ENCODE measurements at regions of chr6 and their contacts with region 1.

Region 1: DNA sequence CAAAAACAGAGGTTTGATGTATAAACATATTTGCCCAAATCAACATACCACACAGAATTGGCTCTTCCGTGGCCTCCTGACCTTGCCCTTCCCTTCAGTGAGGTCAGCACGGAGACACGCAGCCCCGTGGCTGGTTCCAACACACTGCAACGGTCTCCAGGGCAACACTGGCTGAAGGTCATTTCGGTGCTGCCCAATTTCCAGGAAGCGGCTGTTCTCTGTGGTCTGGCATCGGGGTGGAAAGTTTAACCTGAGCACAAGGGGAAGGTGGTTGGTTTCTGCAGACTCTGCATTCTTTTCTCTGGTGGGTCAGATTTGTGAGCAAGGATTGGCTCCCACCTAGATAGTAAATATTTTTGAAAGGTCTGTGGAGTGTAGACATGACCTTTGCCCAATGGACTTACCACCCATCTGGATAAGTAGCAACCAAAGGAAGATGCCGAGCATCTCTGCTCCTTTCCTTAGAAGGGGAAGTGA is 177.6 kb upstream of the PHACTR1 start:
- DNase-seq: peak; percentile 89
- H3K4me3 ChIP-seq: no peak overlapping the region
- H3K27ac ChIP-seq: peak overlapping the region; percentile 87
- H3K4me1 ChIP-seq: peaks cover 51% of the 10 kb centered on the region
- H3K27me3 ChIP-seq: no peaks in the 10 kb centered on the region
- CTCF ChIP-seq: no peak
- POLR2A ChIP-seq: peak; percentile 38

Region 2: DNA sequence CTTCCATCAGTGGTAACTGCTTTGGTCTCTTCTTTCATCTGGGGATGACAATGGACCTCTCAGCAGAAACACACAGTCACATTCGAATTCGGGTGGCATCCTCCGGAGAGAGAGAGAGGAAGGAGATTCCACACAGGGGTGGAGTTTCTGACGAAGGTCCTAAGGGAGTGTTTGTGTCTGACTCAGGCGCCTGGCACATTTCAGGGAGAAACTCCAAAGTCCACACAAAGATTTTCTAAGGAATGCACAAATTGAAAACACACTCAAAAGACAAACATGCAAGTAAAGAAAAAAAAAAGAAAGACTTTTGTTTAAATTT is 242.7 kb before region 1 on chr6:
- CTCF ChIA-PET with region 1: interaction called, 3 read pairs
- POLR2A ChIA-PET with region 1: interaction called, 6 read pairs
- dilution Hi-C with region 1: no loop called
- intact Hi-C with region 1: loop called (anchors 1 kb)
- DNase-seq: peak; percentile 53
- H3K4me3 ChIP-seq: peak overlapping the region in 2 of 3 experiments; percentile 91 to 96
- H3K27ac ChIP-seq: peak overlapping the region; percentile 98
- H3K4me1 ChIP-seq: peaks cover 30% of the 10 kb centered on the region
- H3K27me3 ChIP-seq: no peaks in the 10 kb centered on the region
- CTCF ChIP-seq: no peak
- POLR2A ChIP-seq: no peak

Region 3: GRCh38 chr6:12395898-12396297 is 143.0 kb before region 1 on chr6:
- CTCF ChIA-PET with region 1: interaction called, 3 read pairs
- POLR2A ChIA-PET with region 1: no interaction called
- dilution Hi-C with region 1: no loop called
- intact Hi-C with region 1: loop called (anchors 1 kb)
- DNase-seq: peak; percentile 47
- H3K4me3 ChIP-seq: no peak overlapping the region
- H3K27ac ChIP-seq: no peak overlapping the region
- H3K4me1 ChIP-seq: peaks cover 26% of the 10 kb centered on the region
- H3K27me3 ChIP-seq: no peaks in the 10 kb centered on the region
- CTCF ChIP-seq: no peak
- POLR2A ChIP-seq: no peak

Region 4: GRCh38 chr6:12490904-12491571 is 47.9 kb before region 1 on chr6:
- CTCF ChIA-PET with region 1: interaction called, 4 read pairs
- POLR2A ChIA-PET with region 1: no interaction called
- dilution Hi-C with region 1: no loop called
- intact Hi-C with region 1: loop called (anchors 1 kb)
- DNase-seq: peak; percentile 96
- H3K4me3 ChIP-seq: no peak overlapping the region
- H3K27ac ChIP-seq: peak overlapping the region; percentile 93
- H3K4me1 ChIP-seq: peaks cover 39% of the 10 kb centered on the region
- H3K27me3 ChIP-seq: no peaks in the 10 kb centered on the region
- CTCF ChIP-seq: no peak
- POLR2A ChIP-seq: no peak

Region 5: DNA sequence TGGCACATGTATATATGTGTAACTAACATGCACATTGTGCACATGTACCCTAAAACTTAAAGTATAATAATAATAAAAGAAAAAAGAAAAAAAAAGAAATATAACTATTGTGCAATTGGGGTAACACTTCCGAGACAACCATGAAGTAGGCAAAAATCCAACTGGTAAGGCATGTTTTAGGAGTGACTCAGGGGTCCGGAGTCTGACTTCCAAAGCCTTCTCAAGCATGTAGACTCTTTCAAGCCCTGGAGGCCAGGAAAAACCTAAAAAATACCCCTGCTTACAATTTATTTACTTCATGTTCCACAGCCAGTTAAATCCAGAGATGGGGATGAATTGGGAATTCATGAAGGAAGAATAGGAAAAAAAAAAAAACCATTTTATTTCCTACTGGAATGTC is 16.3 kb after region 1 on chr6:
- CTCF ChIA-PET with region 1: no interaction called
- POLR2A ChIA-PET with region 1: no interaction called
- dilution Hi-C with region 1: no loop called
- intact Hi-C with region 1: no loop called
- DNase-seq: no peak
- H3K4me3 ChIP-seq: no peak overlapping the region
- H3K27ac ChIP-seq: no peak overlapping the region
- H3K4me1 ChIP-seq: no peaks in the 10 kb centered on the region
- H3K27me3 ChIP-seq: no peaks in the 10 kb centered on the region
- CTCF ChIP-seq: no peak
- POLR2A ChIP-seq: no peak

Region 6: GRCh38 chr6:12572896-12573827 is 34.2 kb after region 1 on chr6:
- CTCF ChIA-PET with region 1: interaction called, 6 read pairs
- POLR2A ChIA-PET with region 1: no interaction called
- dilution Hi-C with region 1: no loop called
- intact Hi-C with region 1: loop called (anchors 1 kb)
- DNase-seq: peak; percentile 92
- H3K4me3 ChIP-seq: peak overlapping the region in 1 of 3 experiments; percentile 13
- H3K27ac ChIP-seq: peak overlapping the region; percentile 92
- H3K4me1 ChIP-seq: peaks cover 75% of the 10 kb centered on the region
- H3K27me3 ChIP-seq: no peaks in the 10 kb centered on the region
- CTCF ChIP-seq: no peak
- POLR2A ChIP-seq: no peak

Measured in endothelial cell of umbilical vein (primary cell).